Posterior cingulate gyrus (tissue), 11 donors: ENCODE measurements at regions of chr4 and their contacts with region 1.

Region 1: DNA sequence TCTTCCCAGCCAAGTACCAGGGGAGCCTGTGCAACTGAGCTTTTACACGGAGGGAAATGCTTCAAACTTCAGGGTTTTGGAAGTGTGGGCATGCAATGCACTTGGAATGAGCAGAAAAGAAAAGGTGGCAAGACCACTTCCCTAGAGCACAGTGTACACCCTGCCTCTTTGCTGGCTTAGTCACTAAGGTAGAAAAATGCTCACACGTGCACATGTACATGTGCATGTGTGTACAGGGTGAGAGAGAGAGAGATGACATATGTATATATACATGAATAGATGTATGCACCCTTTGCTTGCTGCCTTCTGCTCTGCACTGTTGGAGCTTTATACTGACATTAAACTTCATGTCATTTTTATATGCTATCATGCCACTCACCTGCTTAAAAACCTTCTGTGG is 7.9 kb upstream of the KLF3 start:
- DNase-seq: no peak

Region 2: DNA sequence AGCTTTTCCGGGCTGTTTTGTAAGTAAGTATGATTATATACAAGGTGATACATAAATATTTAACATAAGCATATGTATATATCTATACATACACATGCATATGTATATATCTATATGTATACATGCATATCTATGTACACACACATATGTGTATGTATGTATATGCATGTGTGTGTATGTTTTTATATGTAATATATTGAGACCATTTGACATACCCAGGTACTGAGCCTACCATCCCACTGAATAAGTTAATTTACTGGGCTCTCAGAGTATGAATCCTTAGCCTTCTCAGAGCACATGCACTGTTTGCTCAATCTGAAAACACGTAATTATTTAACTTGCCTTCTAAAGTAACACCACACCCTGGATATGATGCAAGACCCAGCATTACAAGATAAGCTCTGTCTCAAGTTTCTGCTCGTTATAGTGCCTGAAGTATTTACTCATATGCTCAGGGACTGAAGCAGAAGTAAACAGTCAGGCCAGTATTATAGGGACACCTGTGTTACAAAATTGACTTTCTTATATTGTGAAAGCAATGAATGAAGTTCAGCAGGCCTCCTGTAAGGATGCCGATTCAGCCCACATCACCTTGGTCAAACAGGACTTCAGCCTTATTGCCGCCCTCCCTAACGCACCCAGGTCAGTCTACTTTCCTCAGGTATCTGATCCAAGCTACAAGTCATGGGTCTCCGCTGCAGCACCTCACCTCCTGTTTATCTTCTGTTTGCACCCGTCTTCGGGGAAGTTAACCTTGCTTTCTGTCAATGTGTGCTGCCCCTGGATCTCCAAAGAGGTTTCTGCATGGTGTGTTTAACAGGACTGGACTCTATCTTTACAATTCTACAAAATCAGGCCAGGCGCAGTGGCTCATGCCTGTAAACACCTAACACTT is 35.1 kb before region 1 on chr4:
- intact Hi-C with region 1: loop called (anchors 5 kb)
- DNase-seq: no peak

Region 3: GRCh38 chr4:38902695-38903094 is 246.6 kb after region 1 on chr4:
- intact Hi-C with region 1: no loop called
- DNase-seq: no peak